CD8-positive, alpha-beta T cell (primary cell): ENCODE measurements at regions of chr7 and their contacts with region 1.

Region 1: GRCh38 chr7:124516911-124517310 is 248.7 kb downstream of the GPR37 start:
- DNase-seq: no peak
- ATAC-seq: no peak
- H3K4me3 ChIP-seq: no peak overlapping the region
- H3K4me3 Mint-ChIP-seq: no peak overlapping the region
- H3K27ac ChIP-seq: no peak overlapping the region
- H3K27ac Mint-ChIP-seq: no peak overlapping the region
- H3K4me1 ChIP-seq: no peaks in the 10 kb centered on the region
- H3K4me1 Mint-ChIP-seq: no peaks in the 10 kb centered on the region
- H3K27me3 ChIP-seq: no peaks in the 10 kb centered on the region
- H3K27me3 Mint-ChIP-seq: no peaks in the 10 kb centered on the region
- CTCF ChIP-seq: no peak

Region 2: DNA sequence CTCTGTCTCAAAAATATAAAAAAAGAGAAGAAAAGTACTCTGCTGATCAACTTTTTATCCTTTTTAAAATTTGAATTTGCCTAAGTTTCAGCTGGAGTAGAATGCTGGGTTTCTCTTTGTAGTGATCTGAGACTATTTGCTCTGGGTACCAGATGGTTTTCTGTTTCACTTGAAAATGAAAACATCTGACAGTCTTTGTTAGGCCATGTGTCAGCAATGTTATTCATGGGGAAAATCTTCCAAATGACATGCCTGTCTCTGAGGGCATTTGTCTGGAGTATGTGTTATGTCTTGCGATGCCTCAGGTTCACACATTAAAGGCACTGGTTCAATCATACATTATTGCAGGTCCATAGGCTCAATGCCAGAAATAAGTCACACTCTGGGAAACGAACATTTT is 308.7 kb before region 1 on chr7:
- CTCF ChIA-PET with region 1: no interaction called
- POLR2A ChIA-PET with region 1: no interaction called
- intact Hi-C with region 1: no loop called
- DNase-seq: no peak
- ATAC-seq: no peak
- H3K4me3 ChIP-seq: no peak overlapping the region
- H3K4me3 Mint-ChIP-seq: no peak overlapping the region
- H3K27ac ChIP-seq: no peak overlapping the region
- H3K27ac Mint-ChIP-seq: no peak overlapping the region
- H3K4me1 ChIP-seq: no peaks in the 10 kb centered on the region
- H3K4me1 Mint-ChIP-seq: no peaks in the 10 kb centered on the region
- H3K27me3 ChIP-seq: no peaks in the 10 kb centered on the region
- H3K27me3 Mint-ChIP-seq: no peaks in the 10 kb centered on the region
- CTCF ChIP-seq: no peak

Region 3: DNA sequence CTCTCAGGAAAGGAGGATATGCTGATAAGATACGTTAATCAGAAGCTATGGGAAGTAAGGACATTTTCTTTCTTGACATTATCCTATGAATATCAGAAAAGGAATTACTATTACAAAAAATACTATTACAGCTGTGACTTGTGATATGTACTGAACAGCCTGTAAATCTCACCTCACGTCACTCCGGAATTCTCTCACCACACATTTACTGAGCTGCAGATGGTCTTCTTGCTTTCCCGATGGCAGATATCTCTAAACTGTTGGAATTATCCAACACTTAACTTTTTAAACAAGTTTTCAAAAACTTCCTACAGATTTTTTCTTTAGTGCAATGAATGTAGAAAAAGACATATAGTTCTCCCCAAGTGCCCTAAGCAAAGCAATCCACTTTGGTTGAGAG is 64.7 kb before region 1 on chr7:
- CTCF ChIA-PET with region 1: no interaction called
- POLR2A ChIA-PET with region 1: no interaction called
- intact Hi-C with region 1: no loop called
- DNase-seq: no peak
- ATAC-seq: no peak
- H3K4me3 ChIP-seq: no peak overlapping the region
- H3K4me3 Mint-ChIP-seq: no peak overlapping the region
- H3K27ac ChIP-seq: no peak overlapping the region
- H3K27ac Mint-ChIP-seq: no peak overlapping the region
- H3K4me1 ChIP-seq: no peaks in the 10 kb centered on the region
- H3K4me1 Mint-ChIP-seq: no peaks in the 10 kb centered on the region
- H3K27me3 ChIP-seq: no peaks in the 10 kb centered on the region
- H3K27me3 Mint-ChIP-seq: no peaks in the 10 kb centered on the region
- CTCF ChIP-seq: no peak

Region 4: GRCh38 chr7:124557587-124557986 is 40.7 kb after region 1 on chr7:
- CTCF ChIA-PET with region 1: no interaction called
- POLR2A ChIA-PET with region 1: no interaction called
- intact Hi-C with region 1: loop called in 1 of 2 experiments (anchors 1 kb)
- DNase-seq: no peak
- ATAC-seq: no peak
- H3K4me3 ChIP-seq: no peak overlapping the region
- H3K4me3 Mint-ChIP-seq: no peak overlapping the region
- H3K27ac ChIP-seq: no peak overlapping the region
- H3K27ac Mint-ChIP-seq: no peak overlapping the region
- H3K4me1 ChIP-seq: no peaks in the 10 kb centered on the region
- H3K4me1 Mint-ChIP-seq: no peaks in the 10 kb centered on the region
- H3K27me3 ChIP-seq: no peaks in the 10 kb centered on the region
- H3K27me3 Mint-ChIP-seq: no peaks in the 10 kb centered on the region
- CTCF ChIP-seq: no peak

Region 5: DNA sequence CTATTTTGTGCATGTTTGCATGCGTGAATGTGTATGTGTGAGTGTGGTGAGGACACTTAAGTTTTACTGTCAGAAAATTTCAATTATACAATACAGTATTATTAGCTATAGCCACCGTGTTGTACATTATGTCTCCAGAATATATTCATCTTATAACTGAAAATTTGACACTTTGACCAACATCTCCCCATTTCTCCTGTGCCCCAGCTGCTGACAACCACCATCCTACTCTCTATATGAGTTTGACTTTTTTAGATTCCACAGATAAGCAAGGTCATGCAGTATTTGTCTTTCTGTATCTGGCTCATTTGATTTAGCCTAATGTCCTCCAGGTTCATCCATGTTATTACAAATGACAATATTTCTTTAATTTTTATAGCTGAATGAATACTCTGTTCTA is 53.6 kb after region 1 on chr7:
- CTCF ChIA-PET with region 1: no interaction called
- POLR2A ChIA-PET with region 1: no interaction called
- intact Hi-C with region 1: no loop called
- DNase-seq: no peak
- ATAC-seq: no peak
- H3K4me3 ChIP-seq: no peak overlapping the region
- H3K4me3 Mint-ChIP-seq: no peak overlapping the region
- H3K27ac ChIP-seq: no peak overlapping the region
- H3K27ac Mint-ChIP-seq: no peak overlapping the region
- H3K4me1 ChIP-seq: no peaks in the 10 kb centered on the region
- H3K4me1 Mint-ChIP-seq: no peaks in the 10 kb centered on the region
- H3K27me3 ChIP-seq: no peaks in the 10 kb centered on the region
- H3K27me3 Mint-ChIP-seq: no peaks in the 10 kb centered on the region
- CTCF ChIP-seq: no peak